AG04449 (cell line): ENCODE measurements at regions of chr5 and their contacts with region 1.

Region 1: GRCh38 chr5:108260117-108260857 is 121.6 kb downstream of the FBXL17 start:
- DNase-seq: peak; percentile 17
- H3K4me3 ChIP-seq: no peak overlapping the region
- CTCF ChIP-seq: peak; percentile 94

Region 2: DNA sequence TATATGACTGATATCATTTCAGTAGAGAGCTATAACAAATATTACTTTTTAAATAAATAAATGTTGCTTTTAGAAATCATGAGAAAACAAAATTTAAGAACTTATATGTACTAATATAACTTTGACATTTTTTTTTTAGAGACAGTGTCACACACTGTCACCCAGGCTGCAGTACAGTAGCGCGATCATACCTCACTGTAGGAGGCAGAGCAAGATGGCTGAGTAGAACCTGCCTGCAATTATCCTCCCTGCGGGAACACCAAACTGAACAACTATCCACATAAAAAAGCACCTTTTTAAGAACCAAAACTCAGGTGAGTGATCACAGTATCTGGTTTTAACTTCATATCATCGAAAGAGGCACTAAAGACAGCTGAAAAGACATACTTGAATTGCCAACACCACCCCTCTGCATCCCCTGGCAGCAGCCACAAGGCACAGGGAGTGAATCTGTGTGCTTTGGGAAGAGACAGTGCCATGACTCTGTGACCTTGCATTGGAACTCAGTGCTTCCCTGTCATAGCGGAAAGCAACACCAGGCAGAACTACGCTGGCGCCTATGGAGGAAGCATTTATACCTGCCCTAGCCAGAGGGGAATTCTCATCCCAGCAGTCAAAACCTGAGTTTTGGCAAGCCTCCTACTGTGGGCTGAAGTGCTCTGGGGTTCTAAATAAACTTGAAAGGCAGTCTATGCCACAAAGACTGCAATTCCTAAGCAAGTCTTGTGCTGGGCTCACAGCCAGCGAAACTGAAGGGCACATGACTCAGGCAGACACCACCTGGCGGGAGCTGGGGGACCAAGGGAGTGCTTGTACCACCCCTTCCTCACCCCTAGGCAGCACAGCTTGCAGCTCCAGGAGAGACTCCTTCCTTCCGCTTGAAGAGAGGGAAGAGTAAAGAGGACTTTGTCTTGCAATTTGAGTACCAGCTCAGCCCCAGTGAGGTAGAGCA is 21.1 kb before region 1 on chr5:
- CTCF ChIA-PET with region 1: interaction called, 32 read pairs
- POLR2A ChIA-PET with region 1: no interaction called
- DNase-seq: no peak
- H3K4me3 ChIP-seq: no peak overlapping the region
- CTCF ChIP-seq: no peak

Region 3: GRCh38 chr5:108276187-108277050 is 16.1 kb after region 1 on chr5:
- CTCF ChIA-PET with region 1: interaction called, 80 read pairs
- POLR2A ChIA-PET with region 1: no interaction called
- DNase-seq: no peak
- H3K4me3 ChIP-seq: no peak overlapping the region
- CTCF ChIP-seq: no peak

Region 4: DNA sequence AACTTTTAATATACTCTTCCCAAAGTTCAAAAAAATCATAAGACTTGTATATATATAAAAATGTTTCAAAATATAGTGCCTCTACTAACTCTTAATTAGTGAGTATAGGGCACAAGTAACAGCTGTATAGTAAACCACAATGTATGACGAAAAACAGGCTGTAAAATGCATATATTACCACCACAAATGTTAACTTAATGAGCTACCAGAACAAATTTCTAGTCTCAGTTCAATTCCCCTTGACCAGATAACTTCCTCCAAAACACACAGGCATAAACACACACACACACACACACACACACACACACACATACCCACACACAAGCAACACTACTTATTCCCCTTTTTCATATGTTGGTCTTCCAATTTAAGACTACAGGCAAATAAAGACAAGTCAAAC is 42.8 kb after region 1 on chr5:
- CTCF ChIA-PET with region 1: interaction called, 15 read pairs
- POLR2A ChIA-PET with region 1: no interaction called
- DNase-seq: no peak
- H3K4me3 ChIP-seq: no peak overlapping the region
- CTCF ChIP-seq: no peak

Region 5: GRCh38 chr5:108334225-108334624 is 73.9 kb after region 1 on chr5:
- CTCF ChIA-PET with region 1: interaction called, 132 read pairs
- POLR2A ChIA-PET with region 1: no interaction called
- DNase-seq: no peak
- H3K4me3 ChIP-seq: no peak overlapping the region
- CTCF ChIP-seq: no peak

Region 6: DNA sequence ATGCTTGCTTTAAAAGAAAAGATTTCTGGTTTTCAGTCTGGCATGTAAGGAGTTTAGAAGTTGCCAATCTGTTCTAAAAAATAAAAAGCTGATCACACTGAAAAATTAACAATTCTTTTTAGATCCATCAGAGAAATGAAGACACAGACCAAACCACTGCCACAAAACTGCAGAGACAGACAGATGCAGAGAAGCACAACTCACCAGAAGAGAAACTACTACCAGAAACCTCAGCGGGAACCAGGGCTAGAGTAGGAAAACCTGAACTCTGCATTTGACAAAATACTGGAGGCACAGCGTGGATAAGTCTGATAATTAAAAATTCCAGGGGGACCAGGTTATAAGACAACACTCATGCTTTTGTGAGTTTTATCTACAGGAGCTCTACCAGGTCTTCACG is 92.8 kb after region 1 on chr5:
- CTCF ChIA-PET with region 1: interaction called, 41 read pairs
- POLR2A ChIA-PET with region 1: no interaction called
- DNase-seq: no peak
- H3K4me3 ChIP-seq: no peak overlapping the region
- CTCF ChIP-seq: no peak

Region 7: DNA sequence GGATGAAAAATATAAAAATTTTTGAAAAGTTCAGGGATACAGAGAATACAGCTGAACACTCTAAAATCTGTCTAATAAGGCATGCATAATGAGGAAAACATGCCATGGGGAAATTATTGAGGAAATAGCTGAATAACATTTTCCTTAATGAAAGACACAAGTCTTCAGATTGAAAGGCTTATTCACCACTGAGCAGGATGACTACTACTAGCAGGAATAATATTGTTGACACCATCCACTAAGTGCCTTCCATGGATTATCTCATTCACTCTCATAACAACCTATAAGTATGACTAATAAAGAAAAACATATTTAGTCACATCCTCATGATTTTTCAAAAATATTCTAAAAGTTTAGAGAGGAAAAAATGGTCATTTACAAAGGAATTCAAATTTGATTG is 390.7 kb after region 1 on chr5:
- CTCF ChIA-PET with region 1: no interaction called
- POLR2A ChIA-PET with region 1: no interaction called
- DNase-seq: no peak
- H3K4me3 ChIP-seq: no peak overlapping the region
- CTCF ChIP-seq: no peak

Region 8: DNA sequence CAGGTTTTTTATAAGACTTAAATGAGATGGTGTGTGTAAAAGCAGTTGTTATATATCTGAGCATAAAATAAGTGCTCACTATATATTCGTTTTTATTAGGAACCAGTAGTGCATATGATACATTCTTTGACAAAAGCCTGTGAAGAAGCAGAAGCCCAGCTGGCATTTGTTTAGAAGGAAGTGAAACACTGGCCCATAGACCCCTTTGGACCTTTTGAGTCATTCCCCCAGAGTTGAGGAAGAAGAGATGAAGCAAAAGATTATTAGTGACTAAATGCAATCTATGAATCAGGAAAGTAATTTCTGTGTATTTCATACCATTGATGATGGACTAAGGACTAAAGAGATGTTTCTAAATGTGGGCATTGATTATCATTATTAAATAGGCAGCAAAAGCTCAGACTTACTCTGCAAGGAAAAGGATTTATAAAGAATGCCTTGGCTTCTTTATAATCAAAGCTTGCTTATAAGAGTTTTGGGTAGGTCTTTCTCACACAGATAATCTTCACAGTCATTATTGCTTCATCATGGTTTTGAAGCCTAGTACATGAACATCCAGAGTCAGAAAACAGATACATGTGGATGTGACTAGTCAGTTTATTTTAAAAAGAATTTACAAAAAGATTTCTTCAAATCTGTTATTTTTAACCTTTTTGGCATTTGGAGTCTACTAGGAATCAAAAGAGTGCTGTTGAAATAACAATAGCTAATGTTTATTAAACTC is 470.5 kb after region 1 on chr5:
- CTCF ChIA-PET with region 1: no interaction called
- POLR2A ChIA-PET with region 1: no interaction called
- DNase-seq: no peak
- H3K4me3 ChIP-seq: no peak overlapping the region
- CTCF ChIP-seq: no peak